ENCODE measurements at regions of chr2 and their contacts with region 1.

Region 1: GRCh38 chr2:172710584-172711024 is 25.0 kb upstream of the RAPGEF4 start:
- DNase-seq: peak in 2 of 10 donors; percentile 44 to 50
- H3K4me3 ChIP-seq: no peak overlapping the region
- H3K27ac ChIP-seq: no peak overlapping the region
- H3K27me3 ChIP-seq: no peaks in the 10 kb centered on the region
- CTCF ChIP-seq: peak; percentile 31 to 84 (median 67)

Region 2: GRCh38 chr2:172172513-172173173 is 538.0 kb before region 1 on chr2:
- intact Hi-C with region 1: loop called in 1 of 2 experiments (anchors 5 kb)
- DNase-seq: peak in 9 of 10 donors; percentile 28 to 81 (median 53)
- H3K4me3 ChIP-seq: peak overlapping the region; percentile 42 to 79 (median 63)
- H3K27ac ChIP-seq: peak overlapping the region in 7 of 59 donors; percentile 11 to 48 (median 26)
- H3K27me3 ChIP-seq: peaks cover 0 to 12% (median 0%) of the 10 kb centered on the region in 45 donors
- CTCF ChIP-seq: peak in 55 of 56 donors; percentile 52 to 96 (median 83)

Region 3: GRCh38 chr2:172588931-172589330 is 121.7 kb before region 1 on chr2:
- intact Hi-C with region 1: loop called in 1 of 2 experiments (anchors 5 kb)
- DNase-seq: no peak
- H3K4me3 ChIP-seq: no peak overlapping the region
- H3K27ac ChIP-seq: no peak overlapping the region
- H3K27me3 ChIP-seq: no peaks in the 10 kb centered on the region
- CTCF ChIP-seq: no peak

Region 4: GRCh38 chr2:172613040-172613439 is 97.6 kb before region 1 on chr2:
- intact Hi-C with region 1: loop called in 1 of 2 experiments (anchors 10 kb)
- DNase-seq: no peak
- H3K4me3 ChIP-seq: no peak overlapping the region
- H3K27ac ChIP-seq: no peak overlapping the region
- H3K27me3 ChIP-seq: no peaks in the 10 kb centered on the region
- CTCF ChIP-seq: no peak

Measured in dorsolateral prefrontal cortex (tissue), 120 donors.